ENCODE measurements at regions of chr7 and their contacts with region 1.

Region 1: GRCh38 chr7:70553364-70553763 is 578.6 kb upstream of the GALNT17 start:
- DNase-seq: no peak
- H3K4me3 ChIP-seq: no peak overlapping the region
- H3K27ac ChIP-seq: no peak overlapping the region
- H3K4me1 ChIP-seq: no peaks in the 10 kb centered on the region
- H3K27me3 ChIP-seq: no peaks in the 10 kb centered on the region
- CTCF ChIP-seq: no peak

Region 2: DNA sequence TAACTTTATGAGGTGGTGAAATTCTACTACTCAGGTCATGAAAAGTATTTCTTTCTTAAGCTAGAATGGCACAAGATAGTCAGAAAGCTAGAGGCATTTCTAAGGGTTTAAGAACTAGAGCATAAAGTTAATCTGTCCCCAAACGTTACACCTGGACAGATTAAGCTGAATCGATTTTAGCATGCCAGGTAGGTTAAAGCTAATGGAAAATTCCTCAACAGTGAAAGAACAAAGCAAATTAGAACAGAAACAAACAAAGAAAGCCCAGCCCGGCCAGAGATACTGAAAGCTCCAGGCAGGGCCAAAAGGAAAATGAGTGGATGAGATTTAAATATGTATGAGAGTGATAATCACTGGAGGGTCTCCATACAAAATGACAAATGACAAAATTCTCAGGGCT is 1565.0 kb after region 1 on chr7:
- intact Hi-C with region 1: loop called (anchors 5 kb)
- DNase-seq: no peak
- H3K4me3 ChIP-seq: no peak overlapping the region
- H3K27ac ChIP-seq: no peak overlapping the region
- H3K4me1 ChIP-seq: no peaks in the 10 kb centered on the region
- H3K27me3 ChIP-seq: no peaks in the 10 kb centered on the region
- CTCF ChIP-seq: no peak